ENCODE measurements at regions of chr16 and their contacts with region 1.

Region 1: DNA sequence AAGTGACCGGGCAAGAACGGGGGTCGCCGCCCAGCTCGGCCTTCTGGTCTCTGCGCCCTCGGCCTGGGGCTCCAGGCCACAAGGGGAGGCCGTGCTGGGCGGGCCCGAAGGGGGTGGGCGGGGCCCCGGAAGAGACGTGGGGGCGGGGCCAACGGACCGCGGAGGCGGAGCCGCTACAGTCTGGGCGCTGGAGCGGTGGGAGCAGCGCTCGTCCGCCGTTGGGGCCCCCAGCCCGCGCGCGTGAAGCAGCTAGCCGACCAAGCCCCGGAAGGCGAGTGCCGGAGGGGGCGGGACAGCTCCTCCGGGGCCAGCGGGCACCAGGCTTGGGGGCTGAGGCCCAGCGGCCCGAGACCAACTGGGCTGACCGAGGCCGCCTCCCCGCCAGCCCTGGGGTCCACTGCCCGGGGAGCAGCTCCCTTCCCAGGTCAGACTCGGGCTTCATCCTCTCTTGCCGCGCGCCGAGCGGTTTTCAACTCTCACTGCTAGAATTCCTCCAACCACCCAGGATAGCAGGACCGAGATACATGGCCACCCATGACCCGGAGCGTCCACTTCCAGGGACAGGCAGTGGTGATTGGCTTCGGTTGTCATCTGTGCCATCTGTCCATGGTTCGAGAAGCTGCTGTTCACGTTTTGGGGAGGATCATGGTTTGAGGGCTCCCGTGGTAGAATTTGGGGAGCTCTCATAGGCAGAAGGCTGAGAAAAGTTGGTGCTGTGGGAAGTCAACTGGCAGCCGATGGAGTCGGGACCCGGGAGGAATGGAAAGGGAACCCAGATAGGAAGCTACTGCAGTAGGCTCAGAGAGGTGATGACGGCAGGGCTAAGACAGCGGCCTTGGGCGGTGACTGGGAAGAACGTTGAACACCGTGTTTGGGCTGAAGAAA is 44.6 kb upstream of the LCMT1 start:
- DNase-seq: peak; percentile 67 to 93 (median 76)
- ATAC-seq: peak; percentile 97
- H3K4me3 ChIP-seq: peak overlapping the region; percentile 91
- H3K4me3 Mint-ChIP-seq: peak overlapping the region; percentile 89
- H3K27ac ChIP-seq: peak overlapping the region; percentile 68 to 88
- H3K27ac Mint-ChIP-seq: peak overlapping the region; percentile 86
- H3K4me1 ChIP-seq: peaks cover 50% of the 10 kb centered on the region
- H3K4me1 Mint-ChIP-seq: peaks cover 43% of the 10 kb centered on the region
- H3K27me3 ChIP-seq: no peaks in the 10 kb centered on the region
- H3K27me3 Mint-ChIP-seq: no peaks in the 10 kb centered on the region
- CTCF ChIP-seq: no peak

Region 2: GRCh38 chr16:25031441-25032307 is 35.3 kb before region 1 on chr16:
- CTCF ChIA-PET with region 1: no interaction called
- POLR2A ChIA-PET with region 1: interaction called, 3 read pairs
- intact Hi-C with region 1: loop called in 1 of 2 experiments (anchors 5 kb)
- DNase-seq: peak; percentile 81 to 97 (median 86)
- ATAC-seq: peak; percentile 99
- H3K4me3 ChIP-seq: peak overlapping the region; percentile 88
- H3K4me3 Mint-ChIP-seq: peak overlapping the region; percentile 90
- H3K27ac ChIP-seq: peak overlapping the region in 1 of 2 donors; percentile 52
- H3K27ac Mint-ChIP-seq: peak overlapping the region; percentile 90
- H3K4me1 ChIP-seq: peaks cover 20% of the 10 kb centered on the region
- H3K4me1 Mint-ChIP-seq: peaks cover 30% of the 10 kb centered on the region
- H3K27me3 ChIP-seq: no peaks in the 10 kb centered on the region
- H3K27me3 Mint-ChIP-seq: no peaks in the 10 kb centered on the region
- CTCF ChIP-seq: no peak

Region 3: GRCh38 chr16:25093208-25094061 is 26.4 kb after region 1 on chr16:
- CTCF ChIA-PET with region 1: no interaction called
- POLR2A ChIA-PET with region 1: interaction called, 12 read pairs
- intact Hi-C with region 1: no loop called
- DNase-seq: peak in 4 of 14 experiments; percentile 15 to 24 (median 18)
- ATAC-seq: peak; percentile 37
- H3K4me3 ChIP-seq: no peak overlapping the region
- H3K4me3 Mint-ChIP-seq: peak overlapping the region; percentile 65
- H3K27ac ChIP-seq: peak overlapping the region; percentile 53 to 57
- H3K27ac Mint-ChIP-seq: peak overlapping the region; percentile 94
- H3K4me1 ChIP-seq: peaks cover 20% of the 10 kb centered on the region
- H3K4me1 Mint-ChIP-seq: peaks cover 33% of the 10 kb centered on the region
- H3K27me3 ChIP-seq: no peaks in the 10 kb centered on the region
- H3K27me3 Mint-ChIP-seq: no peaks in the 10 kb centered on the region
- CTCF ChIP-seq: no peak